ENCODE measurements at regions of chr9 and their contacts with region 1.

Region 1: DNA sequence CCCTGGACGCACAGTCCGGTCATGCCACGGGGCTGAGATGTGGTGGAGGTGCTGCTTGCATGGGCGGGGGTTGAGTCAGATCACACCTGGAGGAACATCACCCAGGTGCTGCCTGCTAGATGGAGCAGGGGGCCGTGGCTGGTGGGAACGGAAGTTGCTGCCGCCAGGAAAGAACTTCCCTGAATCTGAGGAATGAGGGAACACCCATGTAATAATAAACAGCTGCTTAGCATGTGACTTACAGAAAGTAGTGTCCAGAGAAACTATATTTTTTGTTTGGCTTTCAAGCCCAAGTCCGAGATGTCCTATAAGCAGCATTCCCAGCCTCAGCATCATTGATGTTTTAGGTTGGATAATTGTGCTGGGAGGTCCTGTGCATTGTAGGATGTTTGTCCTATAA is 27.1 kb upstream of the FAM240B start:
- DNase-seq: no peak
- H3K4me3 ChIP-seq: no peak overlapping the region
- H3K27ac ChIP-seq: no peak overlapping the region
- H3K4me1 ChIP-seq: no peaks in the 10 kb centered on the region
- H3K27me3 ChIP-seq: no peaks in the 10 kb centered on the region
- CTCF ChIP-seq: no peak

Region 2: DNA sequence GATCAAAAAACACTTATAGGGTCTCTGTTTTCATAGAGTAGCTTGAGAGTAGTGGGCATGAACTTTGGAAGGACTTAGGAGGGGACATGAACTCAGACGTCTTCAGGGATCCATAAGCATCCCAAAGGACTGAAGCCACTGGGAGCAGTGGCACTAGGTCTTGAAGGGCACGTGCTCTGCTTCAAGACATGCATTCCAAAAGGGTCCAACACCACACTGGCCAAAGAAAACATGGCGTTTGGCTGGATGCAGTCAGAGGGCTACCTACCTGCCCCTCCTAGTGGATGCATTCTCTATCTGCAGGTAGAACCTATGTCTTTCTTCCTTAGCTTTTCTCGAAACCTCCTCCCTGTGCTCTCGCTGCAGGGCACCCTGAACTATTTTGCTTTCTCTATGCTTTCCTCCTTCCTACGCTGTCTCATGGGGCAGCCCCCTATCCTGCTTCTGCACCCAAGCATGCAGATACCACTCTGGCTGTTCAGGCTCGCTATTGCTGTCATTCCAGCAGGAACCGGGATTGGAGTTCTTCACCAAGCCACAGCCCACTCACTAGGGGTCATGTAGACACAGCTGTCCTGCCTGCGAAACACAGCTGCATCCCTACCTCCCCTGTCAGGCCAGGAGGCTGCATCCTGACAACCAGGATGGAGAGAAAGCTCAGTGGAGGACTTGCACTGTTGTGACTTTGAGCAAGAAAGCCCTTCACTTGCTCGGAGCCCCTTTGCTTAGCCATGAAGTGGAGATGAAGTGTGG is 39.0 kb before region 1 on chr9:
- intact Hi-C with region 1: loop called (anchors 5 kb)
- DNase-seq: no peak
- H3K4me3 ChIP-seq: no peak overlapping the region
- H3K27ac ChIP-seq: no peak overlapping the region
- H3K4me1 ChIP-seq: no peaks in the 10 kb centered on the region
- H3K27me3 ChIP-seq: peaks cover 5% of the 10 kb centered on the region
- CTCF ChIP-seq: peak; percentile 33